Cardiac septum (tissue), 1 donor: ENCODE measurements at regions of chr18 and their contacts with region 1.

Region 1: GRCh38 chr18:68660354-68661183 is 54.3 kb downstream of the TMX3 start:
- DNase-seq: no peak

Region 2: DNA sequence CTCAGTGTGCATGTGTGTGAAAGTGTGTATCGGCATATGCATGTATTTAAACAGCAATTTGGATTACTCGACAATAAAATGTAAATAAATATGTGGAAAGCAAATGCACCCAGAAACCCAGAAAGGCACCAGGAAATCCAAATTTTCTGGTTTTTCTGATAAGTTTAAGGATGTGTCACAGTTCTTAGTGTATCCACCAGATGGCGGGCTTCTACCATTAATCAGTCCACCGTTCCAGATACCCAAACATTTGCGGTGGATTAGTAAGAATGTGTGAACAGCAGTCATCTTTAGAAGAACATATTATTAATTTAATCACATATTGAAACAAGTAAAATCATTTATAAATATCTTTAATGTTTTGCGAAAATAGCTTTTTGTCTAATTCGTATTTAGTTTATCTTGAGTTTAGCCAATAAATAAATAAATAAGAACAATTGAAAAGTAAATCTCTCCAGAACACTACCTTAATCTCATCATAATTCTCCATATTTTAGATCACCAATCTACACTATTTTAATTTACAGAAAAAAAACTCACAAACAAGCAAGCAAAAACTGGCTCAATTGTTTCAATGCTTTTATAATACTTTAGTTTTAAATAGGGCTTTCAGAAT is 1442.9 kb before region 1 on chr18:
- intact Hi-C with region 1: loop called (anchors 5 kb)
- DNase-seq: no peak

Region 3: DNA sequence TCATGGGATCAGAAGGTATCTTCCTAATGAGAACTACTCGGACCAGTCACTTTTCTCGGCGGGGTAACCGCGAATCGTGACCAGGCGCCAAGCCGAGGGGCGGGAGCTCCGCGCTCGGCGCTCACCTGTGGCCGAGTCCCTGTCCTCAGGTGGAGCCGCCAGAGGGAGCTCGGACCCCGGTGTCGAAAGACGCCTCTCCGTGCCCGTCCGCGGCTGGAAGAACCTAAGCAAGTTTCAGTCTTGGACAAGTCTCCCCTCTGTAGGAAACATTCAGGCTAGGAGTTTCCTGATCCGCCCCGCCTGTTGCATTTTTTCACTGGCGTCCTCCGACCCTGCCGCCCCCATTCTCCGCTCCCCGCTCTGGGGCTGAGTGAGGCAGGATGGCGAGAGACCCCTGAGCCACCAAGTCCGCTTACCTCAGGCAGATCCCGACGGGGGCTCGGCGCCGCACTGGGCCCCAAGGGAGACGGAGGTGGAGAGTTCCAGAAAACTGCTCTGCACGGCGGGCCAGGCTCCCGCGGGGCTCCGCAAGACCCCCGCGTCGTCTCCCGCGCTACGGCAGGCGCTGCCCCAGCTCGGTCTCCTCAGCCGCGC is 1144.5 kb before region 1 on chr18:
- intact Hi-C with region 1: loop called (anchors 10 kb)
- DNase-seq: peak; percentile 87

Region 4: GRCh38 chr18:68735483-68736343 is 75.1 kb after region 1 on chr18:
- intact Hi-C with region 1: loop called (anchors 10 kb)
- DNase-seq: no peak